Activated B cell treated with CpG ODN at 0.5 μM for 24 hours (primary cell): ENCODE measurements at regions of chr11 and their contacts with region 1.

Region 1: DNA sequence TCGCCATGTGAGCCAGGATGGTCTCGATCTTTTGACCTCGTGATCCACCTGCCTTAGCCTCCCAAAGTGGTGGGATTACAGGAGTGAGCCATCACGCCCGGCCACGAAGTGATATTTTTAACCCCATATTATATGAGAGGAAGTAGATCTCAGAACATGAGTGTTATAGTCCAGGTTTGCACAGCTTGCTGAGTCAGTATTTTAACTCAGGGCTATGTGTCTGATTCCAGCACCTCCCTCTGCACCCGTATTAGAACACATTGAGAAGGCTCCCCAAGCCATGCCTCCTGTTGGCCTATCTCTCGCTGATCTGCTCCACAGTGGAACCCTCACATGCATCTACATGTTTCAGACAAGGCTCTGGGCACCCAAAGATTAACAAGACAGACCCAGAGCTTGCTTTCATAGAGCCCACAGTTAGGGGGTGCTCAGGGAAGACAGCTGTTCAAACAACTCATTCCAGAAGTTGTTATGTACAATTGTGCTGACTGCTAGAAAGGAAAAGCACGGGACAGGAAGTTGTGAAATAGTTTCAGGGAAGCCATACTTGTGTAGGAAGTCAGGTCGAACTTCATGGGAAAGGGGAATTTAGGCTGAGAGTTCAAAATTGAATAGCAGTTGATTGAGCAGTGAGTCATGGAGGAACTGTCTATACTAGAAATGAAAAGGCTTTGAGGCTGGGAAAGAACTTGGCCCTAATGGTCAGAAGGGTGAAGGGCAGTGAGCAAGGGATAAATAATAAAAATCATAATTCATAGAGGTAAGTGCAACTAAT is 49.3 kb upstream of the CLPB start:
- DNase-seq: no peak
- ATAC-seq: no peak
- H3K4me3 Mint-ChIP-seq: no peak overlapping the region
- H3K27ac Mint-ChIP-seq: no peak overlapping the region
- H3K4me1 Mint-ChIP-seq: peaks cover 3% of the 10 kb centered on the region
- H3K27me3 Mint-ChIP-seq: peaks cover 24% of the 10 kb centered on the region
- CTCF ChIP-seq: no peak

Region 2: DNA sequence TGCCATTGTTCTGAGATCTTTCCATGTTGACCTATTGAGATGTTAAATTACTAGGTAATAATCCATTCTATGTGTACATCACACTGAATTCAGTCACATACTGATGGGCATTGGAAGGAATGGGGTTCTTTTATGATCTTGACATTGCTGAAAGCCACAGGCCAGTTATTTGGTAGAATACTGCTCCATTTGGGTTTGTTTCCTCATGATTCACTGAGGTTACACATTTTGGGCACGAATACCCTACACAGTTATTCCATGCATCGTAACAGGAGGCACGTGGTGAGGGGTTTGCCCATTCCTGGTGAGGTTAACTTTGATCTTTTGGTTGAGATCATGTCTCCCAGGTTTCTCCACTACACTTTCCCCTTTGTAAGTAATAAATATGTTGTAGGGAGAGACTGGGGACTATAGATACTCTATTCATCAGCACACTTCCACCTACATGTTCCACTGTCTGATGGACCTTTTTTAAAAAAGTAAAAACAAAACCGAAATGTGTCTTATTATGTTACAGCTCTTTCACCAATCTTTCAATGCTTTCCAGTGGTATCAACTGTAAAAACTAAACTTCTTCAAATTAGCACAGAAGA is 303.7 kb before region 1 on chr11:
- CTCF ChIA-PET with region 1: no interaction called
- POLR2A ChIA-PET with region 1: no interaction called
- intact Hi-C with region 1: no loop called
- DNase-seq: no peak
- ATAC-seq: no peak
- H3K4me3 Mint-ChIP-seq: no peak overlapping the region
- H3K27ac Mint-ChIP-seq: no peak overlapping the region
- H3K4me1 Mint-ChIP-seq: peaks cover 4% of the 10 kb centered on the region
- H3K27me3 Mint-ChIP-seq: peaks cover 22% of the 10 kb centered on the region
- CTCF ChIP-seq: no peak

Region 3: DNA sequence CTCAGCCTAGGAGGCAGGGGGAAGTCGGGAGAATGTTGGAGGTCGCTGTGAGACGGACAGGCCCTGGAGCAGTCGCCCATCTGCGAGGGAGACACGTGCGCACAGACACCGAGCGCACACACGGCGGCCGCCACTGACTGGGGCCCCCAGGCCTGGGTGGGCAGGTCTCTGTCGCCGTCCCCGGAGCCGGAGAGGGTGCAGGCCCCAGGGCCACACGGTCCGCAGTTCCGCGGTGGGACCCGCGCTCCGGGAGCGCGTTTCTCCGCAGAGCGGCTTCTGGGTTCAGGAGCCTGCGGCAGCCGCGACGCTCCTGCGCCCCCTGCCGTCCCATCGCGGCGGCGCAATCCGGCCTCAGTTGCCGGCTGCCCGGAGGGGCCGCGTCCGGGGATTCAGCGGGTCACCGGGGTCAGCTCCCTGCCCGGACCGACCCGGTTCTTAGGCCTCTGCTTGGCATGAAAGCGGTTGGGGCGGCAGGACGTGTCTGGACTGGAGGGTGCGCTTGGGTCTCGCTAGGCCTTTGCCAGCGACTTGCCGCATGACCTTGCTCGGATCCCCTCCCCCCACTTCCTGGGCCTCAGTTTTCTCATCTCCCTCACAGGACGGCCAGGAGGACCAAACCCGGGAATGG is 159.4 kb after region 1 on chr11:
- CTCF ChIA-PET with region 1: interaction called, 3 read pairs
- POLR2A ChIA-PET with region 1: no interaction called
- intact Hi-C with region 1: loop called (anchors 1 kb)
- DNase-seq: peak; percentile 78
- ATAC-seq: peak; percentile 85
- H3K4me3 Mint-ChIP-seq: peak overlapping the region; percentile 67
- H3K27ac Mint-ChIP-seq: no peak overlapping the region
- H3K4me1 Mint-ChIP-seq: no peaks in the 10 kb centered on the region
- H3K27me3 Mint-ChIP-seq: peaks cover 7% of the 10 kb centered on the region
- CTCF ChIP-seq: peak; percentile 72

Region 4: DNA sequence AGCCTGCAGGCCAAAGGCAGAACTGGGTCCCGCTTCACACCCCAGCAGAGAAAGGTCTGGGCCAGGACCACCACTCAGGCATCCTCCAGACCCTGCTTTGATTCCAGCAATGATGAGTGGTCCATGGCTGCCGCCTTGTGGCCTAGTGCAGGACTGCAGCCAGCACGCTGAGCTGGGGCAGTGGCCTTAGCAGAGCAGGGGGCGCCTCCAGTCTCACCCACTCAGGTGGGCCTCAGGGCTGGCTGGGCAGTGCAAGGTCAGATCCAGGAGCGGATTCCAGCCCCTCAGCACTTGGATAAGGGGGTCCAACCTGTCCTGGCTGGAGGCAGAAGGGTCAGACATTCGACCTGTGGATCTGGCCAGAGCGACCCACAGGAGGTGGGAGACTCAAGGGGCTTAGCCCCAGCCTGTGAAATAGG is 200.2 kb after region 1 on chr11:
- CTCF ChIA-PET with region 1: interaction called, 3 read pairs
- POLR2A ChIA-PET with region 1: no interaction called
- intact Hi-C with region 1: loop called (anchors 1 kb)
- DNase-seq: peak; percentile 70
- ATAC-seq: peak; percentile 79
- H3K4me3 Mint-ChIP-seq: no peak overlapping the region
- H3K27ac Mint-ChIP-seq: no peak overlapping the region
- H3K4me1 Mint-ChIP-seq: peaks cover 1% of the 10 kb centered on the region
- H3K27me3 Mint-ChIP-seq: no peaks in the 10 kb centered on the region
- CTCF ChIP-seq: peak; percentile 49

Region 5: GRCh38 chr11:72848846-72849466 is 365.4 kb after region 1 on chr11:
- CTCF ChIA-PET with region 1: no interaction called
- POLR2A ChIA-PET with region 1: no interaction called
- intact Hi-C with region 1: loop called (anchors 5 kb)
- DNase-seq: no peak
- ATAC-seq: peak; percentile 54
- H3K4me3 Mint-ChIP-seq: no peak overlapping the region
- H3K27ac Mint-ChIP-seq: no peak overlapping the region
- H3K4me1 Mint-ChIP-seq: peaks cover 16% of the 10 kb centered on the region
- H3K27me3 Mint-ChIP-seq: no peaks in the 10 kb centered on the region
- CTCF ChIP-seq: no peak